ENCODE measurements at regions of chr4 and their contacts with region 1.

Region 1: GRCh38 chr4:4289941-4290850 is at the starts of genes LYAR and ZBTB49:
- DNase-seq: peak; percentile 96
- H3K4me3 Mint-ChIP-seq: peak within 1 kb of the TSS; percentile 95
- H3K27ac Mint-ChIP-seq: peak within 1 kb of the TSS; percentile 78
- H3K4me1 Mint-ChIP-seq: peaks cover 55% of the 10 kb centered on the region
- H3K27me3 Mint-ChIP-seq: no peaks in the 10 kb centered on the region
- total RNA-seq, gene LYAR: 42.3 to 42.4 TPM
- total RNA-seq, gene ZBTB49: 4.2 to 4.5 TPM

Region 2: GRCh38 chr4:4386736-4387392 is 96.7 kb after region 1 on chr4 and contains the start of gene NSG1:
- CTCF ChIA-PET with region 1: no interaction called
- intact Hi-C with region 1: loop called (anchors 2 kb)
- DNase-seq: peak; percentile 42
- H3K4me3 Mint-ChIP-seq: peak within 1 kb of the TSS; percentile 72
- H3K27ac Mint-ChIP-seq: no peak within 1 kb of the TSS
- H3K4me1 Mint-ChIP-seq: peaks cover 12% of the 10 kb centered on the region
- H3K27me3 Mint-ChIP-seq: peaks cover 22% of the 10 kb centered on the region
- total RNA-seq, gene NSG1: 1.9 to 2.1 TPM

Region 3: GRCh38 chr4:4488405-4489404 is 198.5 kb after region 1 on chr4:
- CTCF ChIA-PET with region 1: no interaction called
- intact Hi-C with region 1: no loop called
- DNase-seq: peak; percentile 88
- H3K4me3 Mint-ChIP-seq: no peak overlapping the region
- H3K27ac Mint-ChIP-seq: no peak overlapping the region
- H3K4me1 Mint-ChIP-seq: peaks cover 8% of the 10 kb centered on the region
- H3K27me3 Mint-ChIP-seq: no peaks in the 10 kb centered on the region

Measured in activated naive CD4-positive, alpha-beta T cell treated with anti-CD3 and anti-CD28 coated beads for 36 hours (primary cell).